ENCODE measurements at regions of chr9 and their contacts with region 1.

Region 1: GRCh38 chr9:38088006-38088925 is 19.2 kb upstream of the SHB start:
- DNase-seq: no peak
- H3K4me3 ChIP-seq: no peak overlapping the region
- CTCF ChIP-seq: peak; percentile 95

Region 2: GRCh38 chr9:37903647-37904444 is 184.4 kb before region 1 on chr9 and contains the start of gene SLC25A51:
- CTCF ChIA-PET with region 1: interaction called, 214 read pairs
- POLR2A ChIA-PET with region 1: no interaction called
- DNase-seq: no peak
- H3K4me3 ChIP-seq: peak within 1 kb of the TSS; percentile 83
- CTCF ChIP-seq: peak; percentile 99

Region 3: GRCh38 chr9:38017149-38017884 is 70.9 kb before region 1 on chr9:
- CTCF ChIA-PET with region 1: interaction called, 23 read pairs
- POLR2A ChIA-PET with region 1: no interaction called
- DNase-seq: no peak
- H3K4me3 ChIP-seq: no peak overlapping the region; the same call in none of the 2 replicates
- CTCF ChIP-seq: peak; percentile 45

Region 4: GRCh38 chr9:38107811-38108304 is 19.6 kb after region 1 on chr9:
- CTCF ChIA-PET with region 1: interaction called, 19 read pairs
- POLR2A ChIA-PET with region 1: no interaction called
- DNase-seq: no peak
- H3K4me3 ChIP-seq: no peak overlapping the region
- CTCF ChIP-seq: no peak

Region 5: GRCh38 chr9:38154501-38155421 is 66.5 kb after region 1 on chr9:
- CTCF ChIA-PET with region 1: interaction called, 46 read pairs
- POLR2A ChIA-PET with region 1: no interaction called
- DNase-seq: no peak
- H3K4me3 ChIP-seq: no peak overlapping the region
- CTCF ChIP-seq: no peak

Region 6: DNA sequence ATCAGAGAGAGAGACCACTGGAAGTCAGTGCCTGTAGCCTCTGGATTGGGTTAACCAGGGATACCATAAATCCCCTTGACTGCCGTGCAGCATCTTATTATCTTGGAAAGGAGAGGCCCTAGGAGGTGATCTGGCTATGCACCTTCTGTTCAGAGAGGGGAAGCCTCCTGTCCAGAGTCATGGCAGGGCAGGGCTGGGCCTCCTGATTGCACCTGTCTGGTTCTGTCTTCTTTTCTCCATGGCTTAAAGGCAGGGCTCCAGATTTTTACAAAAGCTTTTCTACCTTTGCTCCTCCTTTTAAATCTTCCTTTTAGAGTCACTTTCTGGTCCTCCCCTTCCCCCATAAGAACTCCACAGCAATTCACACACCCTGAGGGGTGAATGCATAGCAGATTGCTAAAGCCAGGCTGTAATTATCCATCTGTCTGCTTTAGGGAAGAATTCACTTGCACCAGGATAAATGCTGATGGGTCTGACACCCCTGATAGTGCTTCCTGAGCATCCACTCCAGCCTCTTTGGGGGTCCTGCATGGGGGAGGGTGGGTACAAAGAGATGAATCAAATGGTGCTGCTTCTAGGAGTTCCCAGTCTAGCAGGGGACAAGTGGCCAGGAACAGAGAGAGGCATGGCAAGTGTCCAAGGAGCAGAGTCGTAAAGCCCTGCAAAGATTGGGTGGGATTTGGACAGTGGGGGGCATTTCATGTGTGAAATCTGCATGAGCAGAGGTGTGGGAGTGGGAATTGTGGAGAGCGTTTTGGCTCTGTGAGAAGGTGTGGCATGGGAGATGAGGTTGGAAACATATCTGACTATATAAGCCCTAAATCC is 163.0 kb after region 1 on chr9:
- CTCF ChIA-PET with region 1: no interaction called
- POLR2A ChIA-PET with region 1: no interaction called
- DNase-seq: no peak
- H3K4me3 ChIP-seq: no peak overlapping the region
- CTCF ChIP-seq: no peak

Region 7: GRCh38 chr9:38263532-38263931 is 175.3 kb after region 1 on chr9:
- CTCF ChIA-PET with region 1: interaction called, 31 read pairs
- POLR2A ChIA-PET with region 1: no interaction called
- DNase-seq: no peak
- H3K4me3 ChIP-seq: no peak overlapping the region
- CTCF ChIP-seq: no peak

Measured in AG04449 (cell line).